ENCODE measurements at regions of chr16 and their contacts with region 1.

Region 1: GRCh38 chr16:31073968-31074813 is at the starts of genes ZNF646 and ZNF668:
- DNase-seq: peak; percentile 98 to 99 (median 99)
- ATAC-seq: peak; percentile 94 to 97 (median 96)
- H3K4me3 ChIP-seq: peak within 1 kb of the TSS; percentile 66 to 100 (median 84)
- H3K27ac ChIP-seq: peak within 1 kb of the TSS; percentile 87 to 99 (median 96)
- H3K4me1 ChIP-seq: peaks cover 3 to 39% (median 24%) of the 10 kb centered on the region in 12 donors
- H3K27me3 ChIP-seq: no peaks in the 10 kb centered on the region
- CTCF ChIP-seq: peak in 1 of 12 donors; percentile 8
- POLR2A ChIP-seq: peak in 1 of 2 donors; percentile 65
- total RNA-seq, gene ZNF646: 8.3 to 15.5 (median 10.3) TPM
- total RNA-seq, gene ZNF668: 3.5 to 11.4 (median 5.8) TPM

Region 2: GRCh38 chr16:30977502-30977901 is 96.7 kb before region 1 on chr16:
- intact Hi-C with region 1: loop called in 2 of 10 experiments (anchors 10 kb)
- DNase-seq: no peak
- ATAC-seq: no peak
- H3K4me3 ChIP-seq: no peak overlapping the region
- H3K27ac ChIP-seq: no peak overlapping the region
- H3K4me1 ChIP-seq: no peaks in the 10 kb centered on the region
- H3K27me3 ChIP-seq: no peaks in the 10 kb centered on the region
- CTCF ChIP-seq: peak in 5 of 12 donors; percentile 10 to 22 (median 16)
- POLR2A ChIP-seq: no peak

Region 3: DNA sequence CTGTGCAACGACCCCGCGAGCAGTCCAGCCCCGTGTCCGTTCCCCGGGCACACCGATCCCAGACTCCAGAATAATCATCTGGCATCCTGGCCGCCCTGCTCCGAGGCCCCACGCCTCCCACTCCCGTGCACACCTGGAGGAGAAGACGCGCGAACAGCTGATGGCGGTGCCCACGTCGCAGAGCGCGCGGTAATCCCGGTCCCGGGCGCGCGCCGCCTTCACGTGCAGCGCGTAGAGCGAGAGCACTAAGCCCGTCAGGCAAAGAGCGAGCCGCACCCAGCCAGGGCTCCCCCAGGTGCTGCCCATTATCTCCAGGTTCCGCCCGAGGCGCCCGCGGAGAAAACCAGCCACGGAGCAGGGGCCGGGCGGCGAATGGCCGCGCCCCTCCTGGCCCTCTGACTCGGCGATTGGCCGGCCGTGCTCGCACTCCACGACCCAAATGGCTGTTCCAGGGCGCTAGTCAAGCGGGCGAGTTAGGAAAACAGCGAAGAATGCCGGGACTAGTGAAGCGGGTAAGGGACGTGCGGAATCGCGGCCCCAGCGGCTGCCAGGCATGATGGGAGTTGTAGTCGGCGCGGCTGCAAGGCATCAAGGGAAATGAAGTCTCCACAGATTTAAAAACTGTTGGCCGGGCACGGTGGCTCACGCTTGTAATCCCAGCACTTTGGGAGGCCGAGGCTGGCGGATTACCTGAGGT is 20.4 kb after region 1 on chr16 and contains the start of gene VKORC1:
- intact Hi-C with region 1: loop called in 2 of 10 experiments (anchors 1 to 2 kb)
- DNase-seq: peak; percentile 95 to 97 (median 96)
- ATAC-seq: peak; percentile 92 to 98 (median 96)
- H3K4me3 ChIP-seq: peak within 1 kb of the TSS; percentile 72 to 95 (median 84)
- H3K27ac ChIP-seq: peak within 1 kb of the TSS; percentile 44 to 93 (median 88)
- H3K4me1 ChIP-seq: peaks cover 0 to 26% (median 18%) of the 10 kb centered on the region in 12 donors
- H3K27me3 ChIP-seq: no peaks in the 10 kb centered on the region
- CTCF ChIP-seq: no peak
- POLR2A ChIP-seq: peak in 1 of 2 donors; percentile 72
- total RNA-seq, gene VKORC1: 25.9 to 63.1 (median 42.0) TPM

Region 4: DNA sequence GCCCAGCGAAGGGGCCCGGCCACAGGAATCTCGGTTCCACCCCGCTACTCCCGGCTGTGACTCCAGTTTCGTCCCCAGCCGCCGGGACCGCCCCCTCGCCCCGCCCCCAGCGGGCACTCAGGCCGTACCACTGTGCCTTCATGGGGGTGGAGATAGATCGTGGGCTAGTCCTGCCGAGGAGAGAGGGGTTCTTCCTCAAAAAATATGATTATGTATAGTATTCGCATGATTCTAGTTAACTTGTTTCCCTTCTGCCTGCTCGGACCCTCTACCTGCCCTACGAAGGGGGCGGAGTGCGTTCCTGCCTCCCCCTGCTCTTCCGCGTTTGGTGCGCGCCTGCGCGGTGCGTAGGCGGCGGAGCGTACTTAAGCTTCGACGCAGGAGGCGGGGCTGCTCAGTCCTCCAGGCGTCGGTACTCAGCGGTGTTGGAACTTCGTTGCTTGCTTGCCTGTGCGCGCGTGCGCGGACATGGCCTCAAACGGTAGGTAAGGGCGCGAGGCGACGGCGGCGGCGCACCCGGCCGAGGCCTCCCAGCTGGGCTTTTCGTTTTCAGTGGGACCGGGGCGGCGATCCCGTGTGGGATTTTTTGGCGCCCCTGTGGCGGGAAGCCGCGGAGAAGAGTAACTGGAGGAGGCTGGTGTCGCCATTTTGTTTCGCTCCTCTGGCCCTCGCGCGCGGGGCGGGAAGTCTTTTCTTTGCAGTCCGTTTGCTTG is 105.7 kb after region 1 on chr16 and contains the start of gene FUS:
- intact Hi-C with region 1: loop called in 1 of 10 experiments (anchors 10 kb)
- DNase-seq: peak; percentile 91 to 96 (median 93)
- ATAC-seq: peak; percentile 84 to 90 (median 88)
- H3K4me3 ChIP-seq: peak within 1 kb of the TSS; percentile 60 to 99 (median 86)
- H3K27ac ChIP-seq: peak within 1 kb of the TSS; percentile 87 to 99 (median 94)
- H3K4me1 ChIP-seq: peaks cover 0 to 47% (median 37%) of the 10 kb centered on the region in 12 donors
- H3K27me3 ChIP-seq: peaks cover 0 to 5% (median 0%) of the 10 kb centered on the region in 9 donors
- CTCF ChIP-seq: peak in 1 of 12 donors; percentile 8
- POLR2A ChIP-seq: peak; percentile 67 to 96
- total RNA-seq, gene FUS: 20.3 to 213 (median 127) TPM